K562 (cell line): ENCODE measurements at regions of chr9 and their contacts with region 1.

Region 1: DNA sequence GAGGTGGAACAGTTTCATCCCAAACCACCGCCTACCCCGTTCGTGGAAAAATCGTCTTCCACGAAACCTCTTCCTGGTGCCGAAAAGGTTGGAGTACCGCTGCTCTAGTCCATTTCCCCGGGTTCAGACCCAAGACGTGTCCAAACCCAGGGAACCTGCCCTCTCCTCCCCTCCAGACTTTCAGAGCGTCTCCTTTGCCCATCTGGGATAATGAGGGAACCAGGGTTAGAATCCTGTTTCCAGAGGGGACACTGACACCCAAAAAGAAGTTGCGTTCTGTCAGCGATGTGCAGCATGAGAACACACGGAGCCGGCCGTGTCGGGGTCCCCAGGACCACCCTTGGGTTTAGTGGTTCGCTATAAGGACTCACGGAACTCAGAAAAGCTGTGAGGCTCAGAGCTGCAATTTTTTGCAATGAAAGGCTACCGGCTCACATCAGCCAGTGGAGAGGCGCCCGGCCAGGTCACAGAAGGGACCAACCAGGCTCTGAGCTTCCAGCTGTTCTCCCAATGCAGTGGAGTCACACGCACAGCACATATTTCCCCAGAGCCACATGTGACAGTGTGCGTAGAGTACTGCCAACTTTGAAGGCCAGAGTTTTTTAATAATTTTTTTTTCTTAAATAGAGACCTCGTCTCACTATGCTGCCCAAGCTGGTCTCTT is 19.4 kb downstream of the LAMC3 start:
- DNase-seq: peak in 3 of 4 experiments; percentile 61 to 70 (median 64)
- ATAC-seq: peak; percentile 1; the same call in 1 of the 3 replicates
- H3K4me3 ChIP-seq: no peak overlapping the region
- H3K27ac ChIP-seq: no peak overlapping the region
- H3K4me1 ChIP-seq: peaks cover 0 to 20% of the 10 kb centered on the region in 2 experiments; a peak in 3 of 5 replicates
- H3K27me3 ChIP-seq: peaks cover 92 to 96% of the 10 kb centered on the region in 2 experiments
- CTCF ChIP-seq: no peak
- EP300 ChIP-seq: no peak
- POLR2A ChIP-seq: no peak
- RAD21 ChIP-seq: no peak

Region 2: GRCh38 chr9:131008909-131009618 is 19.3 kb before region 1 on chr9 and contains the start of gene LAMC3:
- CTCF ChIA-PET with region 1: no interaction called
- POLR2A ChIA-PET with region 1: interaction called, 122 read pairs
- in situ Hi-C with region 1: no loop called
- intact Hi-C with region 1: no loop called
- DNase-seq: peak; percentile 56 to 67 (median 60)
- ATAC-seq: peak; percentile 23
- H3K4me3 ChIP-seq: no peak within 1 kb of the TSS
- H3K27ac ChIP-seq: no peak within 1 kb of the TSS
- H3K4me1 ChIP-seq: peaks cover 7 to 24% of the 10 kb centered on the region in 2 experiments; a peak in 3 of 5 replicates
- H3K27me3 ChIP-seq: peaks cover 72 to 86% of the 10 kb centered on the region in 2 experiments
- CTCF ChIP-seq: no peak
- EP300 ChIP-seq: no peak
- POLR2A ChIP-seq: no peak
- RAD21 ChIP-seq: no peak
- polyA plus RNA-seq, gene LAMC3: not detected

Region 3: GRCh38 chr9:131149688-131150053 is 121.3 kb after region 1 on chr9:
- CTCF ChIA-PET with region 1: no interaction called
- POLR2A ChIA-PET with region 1: no interaction called
- in situ Hi-C with region 1: no loop called
- intact Hi-C with region 1: no loop called
- DNase-seq: peak in 1 of 4 experiments; percentile 63
- ATAC-seq: peak; percentile 2; the same call in 2 of the 3 replicates
- H3K4me3 ChIP-seq: no peak overlapping the region
- H3K27ac ChIP-seq: peak overlapping the region; percentile 1; the same call in 2 of the 3 replicates
- H3K4me1 ChIP-seq: no peaks in the 10 kb centered on the region
- H3K27me3 ChIP-seq: no peaks in the 10 kb centered on the region
- CTCF ChIP-seq: no peak
- EP300 ChIP-seq: no peak
- POLR2A ChIP-seq: no peak
- RAD21 ChIP-seq: no peak

Region 4: GRCh38 chr9:131598121-131598520 is 569.8 kb after region 1 on chr9:
- CTCF ChIA-PET with region 1: no interaction called
- POLR2A ChIA-PET with region 1: no interaction called
- in situ Hi-C with region 1: no loop called
- intact Hi-C with region 1: no loop called
- DNase-seq: no peak
- ATAC-seq: no peak
- H3K4me3 ChIP-seq: no peak overlapping the region
- H3K27ac ChIP-seq: no peak overlapping the region
- H3K4me1 ChIP-seq: peaks cover 6 to 19% of the 10 kb centered on the region in 2 experiments; a peak in 4 of 5 replicates
- H3K27me3 ChIP-seq: no peaks in the 10 kb centered on the region
- CTCF ChIP-seq: no peak
- EP300 ChIP-seq: no peak
- POLR2A ChIP-seq: no peak
- RAD21 ChIP-seq: no peak